ENCODE measurements at regions of chr16 and their contacts with region 1.

Region 1: GRCh38 chr16:71412270-71413160 is 29.3 kb downstream of the TLE7 start:
- DNase-seq: peak; percentile 57 to 72 (median 60)
- H3K4me3 ChIP-seq: no peak overlapping the region
- H3K27ac ChIP-seq: no peak overlapping the region
- H3K4me1 ChIP-seq: peaks cover 0 to 10% (median 6%) of the 10 kb centered on the region in 4 experiments
- H3K27me3 ChIP-seq: peaks cover 0 to 84% (median 22%) of the 10 kb centered on the region in 5 experiments

Region 2: DNA sequence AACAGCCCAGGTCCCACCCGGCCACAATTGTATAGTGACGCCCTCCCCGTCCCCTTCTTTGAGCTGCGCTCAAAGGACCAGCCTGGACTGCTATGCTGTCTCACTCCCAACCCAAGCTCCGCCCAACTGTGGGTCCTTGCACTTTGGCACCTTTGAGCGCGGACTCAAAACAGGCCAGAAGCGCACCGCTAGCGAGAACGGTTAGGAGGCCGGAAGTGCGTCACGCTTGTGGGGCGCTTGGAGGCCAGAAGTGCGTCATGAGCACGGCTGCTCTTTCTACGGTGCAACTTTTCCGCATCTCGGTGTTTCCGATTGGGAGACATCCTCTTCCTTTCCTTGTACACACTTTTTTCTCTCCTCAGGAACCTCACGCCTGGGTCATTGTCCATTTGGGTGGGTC is 76.6 kb after region 1 on chr16 and contains the start of gene ZNF19:
- CTCF ChIA-PET with region 1: interaction called, 12 read pairs
- POLR2A ChIA-PET with region 1: no interaction called
- DNase-seq: no peak
- H3K4me3 ChIP-seq: no peak within 1 kb of the TSS
- H3K27ac ChIP-seq: no peak within 1 kb of the TSS
- H3K4me1 ChIP-seq: peaks cover 2 to 23% (median 10%) of the 10 kb centered on the region in 4 experiments
- H3K27me3 ChIP-seq: peaks cover 0 to 3% (median 0%) of the 10 kb centered on the region in 5 experiments

Region 3: GRCh38 chr16:71499775-71500364 is 87.4 kb after region 1 on chr16:
- CTCF ChIA-PET with region 1: interaction called, 85 read pairs
- POLR2A ChIA-PET with region 1: no interaction called
- DNase-seq: peak; percentile 69 to 86 (median 79)
- H3K4me3 ChIP-seq: no peak overlapping the region
- H3K27ac ChIP-seq: no peak overlapping the region
- H3K4me1 ChIP-seq: no peaks in the 10 kb centered on the region
- H3K27me3 ChIP-seq: peaks cover 0 to 3% (median 0%) of the 10 kb centered on the region in 5 experiments

Region 4: DNA sequence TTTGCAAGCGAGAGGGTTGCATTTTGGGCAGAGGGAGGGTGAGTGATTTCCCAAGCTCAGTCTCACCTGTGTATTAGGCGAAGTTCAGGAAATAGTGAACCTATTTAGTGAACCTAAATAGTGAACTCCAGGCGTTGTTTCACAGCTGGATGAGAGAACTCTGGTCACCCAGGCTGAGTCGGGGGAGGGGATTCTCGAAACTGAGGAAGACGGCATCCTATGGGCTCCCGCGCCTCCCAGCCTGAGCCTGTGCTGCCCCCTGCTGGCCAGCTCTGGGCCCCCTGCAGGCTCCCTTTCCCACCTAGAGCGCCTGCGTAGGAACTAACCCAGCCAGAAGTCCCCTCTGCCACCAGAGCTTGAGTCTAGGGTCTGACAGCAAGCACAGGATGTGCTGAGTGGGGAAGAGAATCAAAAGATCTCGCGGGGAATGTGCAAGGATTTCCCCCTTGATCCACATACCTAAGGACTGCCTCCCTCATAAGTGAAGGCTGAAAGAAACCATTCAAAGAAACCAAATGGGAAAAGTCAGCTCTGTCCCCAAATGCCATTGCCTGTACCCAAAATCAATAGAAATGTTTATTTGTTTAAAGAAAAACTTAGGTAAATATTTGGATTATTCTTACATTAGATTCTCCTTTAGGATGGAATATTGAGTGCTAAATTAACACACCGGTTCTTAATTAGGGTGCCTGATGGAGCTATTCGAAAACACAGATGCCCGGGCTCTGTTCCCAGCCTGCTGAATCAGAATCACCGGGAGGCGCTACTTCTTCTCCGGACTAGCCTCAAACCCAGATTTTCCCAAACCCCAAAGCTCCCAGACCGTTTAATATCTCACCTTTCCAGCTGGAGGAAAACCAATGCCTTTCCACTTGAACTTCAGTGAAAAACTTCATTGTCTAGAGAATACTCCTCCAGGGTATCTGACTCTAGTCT is 198.7 kb after region 1 on chr16:
- CTCF ChIA-PET with region 1: interaction called, 21 read pairs
- POLR2A ChIA-PET with region 1: no interaction called
- DNase-seq: peak; percentile 56 to 72 (median 70)
- H3K4me3 ChIP-seq: peak overlapping the region in 1 of 7 experiments; percentile 28
- H3K27ac ChIP-seq: no peak overlapping the region
- H3K4me1 ChIP-seq: peaks cover 0 to 3% (median under 1%) of the 10 kb centered on the region in 4 experiments
- H3K27me3 ChIP-seq: peaks cover 0 to 21% (median 3%) of the 10 kb centered on the region in 5 experiments